H1 (cell line): ENCODE measurements at regions of chr11 and their contacts with region 1.

Region 1: GRCh38 chr11:61567286-61568061 is 13.4 kb downstream of the SYT7 start:
- DNase-seq: peak; percentile 58 to 98
- H3K4me3 ChIP-seq: peak overlapping the region; percentile 16 to 54 (median 39); a peak in 6 of 8 replicates
- H3K27ac ChIP-seq: no peak overlapping the region
- H3K4me1 ChIP-seq: peaks cover 0 to 14% (median 5%) of the 10 kb centered on the region in 4 experiments; a peak in 5 of 7 replicates
- H3K27me3 ChIP-seq: peaks cover 0 to 10% (median 4%) of the 10 kb centered on the region in 4 experiments; a peak in 3 of 7 replicates
- CTCF ChIP-seq: peak; percentile 95 to 98 (median 96)
- EP300 ChIP-seq: no peak
- POLR2A ChIP-seq: no peak
- RAD21 ChIP-seq: peak; percentile 40 to 63; a peak in 3 of 4 replicates

Region 2: DNA sequence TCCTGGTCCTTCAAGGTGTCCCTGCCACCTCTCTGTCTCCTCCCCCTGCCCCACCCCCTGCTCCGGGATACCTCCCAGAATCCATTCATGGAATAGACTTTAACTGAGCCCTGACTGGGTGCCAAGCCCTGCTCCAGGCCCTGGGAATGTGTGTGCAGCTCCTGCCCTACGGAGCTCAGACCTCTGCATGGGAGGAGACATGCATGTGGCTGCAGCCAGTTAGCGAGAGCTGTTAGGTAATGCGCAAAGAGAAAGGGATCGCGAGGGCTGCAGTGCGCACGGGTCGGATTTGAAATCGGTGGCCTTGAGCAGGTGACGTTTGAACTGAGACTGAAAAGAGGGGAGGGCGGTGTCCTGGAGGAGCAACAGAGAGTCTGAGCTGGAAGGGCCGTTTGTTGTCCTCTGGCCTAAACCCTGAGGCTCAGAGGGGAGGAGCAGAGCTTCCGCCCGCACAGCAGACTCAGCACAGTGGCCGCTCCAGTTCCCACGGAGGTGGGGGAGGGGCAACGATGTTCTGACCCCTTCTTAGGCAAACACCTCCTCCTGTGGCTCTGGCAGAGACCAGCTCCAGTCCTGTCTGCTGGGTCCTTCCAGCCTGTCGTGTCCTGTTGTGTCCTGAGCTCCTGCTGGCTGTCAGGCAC is 78.7 kb before region 1 on chr11:
- CTCF ChIA-PET with region 1: interaction called, 37 read pairs
- POLR2A ChIA-PET with region 1: no interaction called
- DNase-seq: peak in 1 of 2 experiments; percentile 66
- H3K4me3 ChIP-seq: no peak overlapping the region
- H3K27ac ChIP-seq: no peak overlapping the region
- H3K4me1 ChIP-seq: peaks cover 0 to 23% (median 17%) of the 10 kb centered on the region in 4 experiments; a peak in 6 of 7 replicates
- H3K27me3 ChIP-seq: 0 out of 7 replicates have a peak, but pooled peaks cover 0 to 2% (median 0%) of the 10 kb centered on the region in 4 experiments
- CTCF ChIP-seq: no peak
- EP300 ChIP-seq: no peak
- POLR2A ChIP-seq: no peak
- RAD21 ChIP-seq: no peak

Region 3: DNA sequence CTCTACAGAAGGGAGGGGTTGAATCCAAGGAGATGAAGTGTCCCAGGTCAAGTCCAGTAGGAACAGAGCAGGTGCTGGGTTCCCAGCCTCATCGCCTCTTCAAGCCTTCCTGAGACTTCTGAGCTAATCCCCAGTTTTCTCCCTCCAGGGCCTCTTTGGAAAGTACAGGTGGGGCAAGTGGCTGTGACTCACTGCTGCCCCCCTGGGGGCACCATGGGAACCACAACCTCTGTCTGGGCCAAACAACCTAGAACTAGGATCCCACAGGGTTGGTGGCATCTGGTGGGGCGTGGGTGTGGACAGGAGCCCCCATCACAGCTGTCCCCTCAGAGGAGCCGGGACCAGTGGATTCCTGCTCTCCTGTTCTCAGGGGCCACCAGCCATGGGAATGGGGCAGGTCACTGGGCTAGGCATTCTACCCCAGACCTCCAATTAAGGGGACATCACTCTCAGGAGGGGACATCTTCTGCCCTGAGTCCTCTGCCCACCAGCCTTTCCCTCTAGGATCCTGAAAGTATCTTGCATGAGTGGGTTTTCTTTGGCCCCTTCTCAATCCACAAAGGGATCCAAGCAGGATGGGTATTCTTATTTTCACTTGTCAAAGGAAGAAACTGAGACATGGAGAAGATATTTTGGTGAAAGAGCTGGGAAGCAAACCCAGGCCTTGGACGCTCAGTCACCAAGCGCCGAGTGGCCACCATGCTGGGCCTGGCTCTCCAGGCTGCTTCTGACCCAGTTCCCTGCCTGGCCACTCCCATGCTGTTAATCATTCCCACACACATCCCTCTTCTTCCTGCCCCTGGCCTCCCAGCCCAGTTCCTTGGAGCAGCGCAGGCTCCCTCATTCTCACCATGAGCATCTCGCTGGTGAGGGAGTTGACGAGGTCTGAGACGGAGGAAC is 35.1 kb before region 1 on chr11:
- CTCF ChIA-PET with region 1: interaction called, 66 read pairs
- POLR2A ChIA-PET with region 1: interaction called, 3 read pairs
- DNase-seq: peak in 1 of 2 experiments; percentile 90
- H3K4me3 ChIP-seq: no peak overlapping the region
- H3K27ac ChIP-seq: no peak overlapping the region
- H3K4me1 ChIP-seq: peaks cover 0 to 11% (median 4%) of the 10 kb centered on the region in 4 experiments; a peak in 5 of 7 replicates
- H3K27me3 ChIP-seq: no peaks in the 10 kb centered on the region
- CTCF ChIP-seq: peak in 2 of 3 experiments; percentile 89 to 94; a peak in 3 of 4 replicates
- EP300 ChIP-seq: no peak
- POLR2A ChIP-seq: no peak
- RAD21 ChIP-seq: peak; percentile 69 to 81

Region 4: DNA sequence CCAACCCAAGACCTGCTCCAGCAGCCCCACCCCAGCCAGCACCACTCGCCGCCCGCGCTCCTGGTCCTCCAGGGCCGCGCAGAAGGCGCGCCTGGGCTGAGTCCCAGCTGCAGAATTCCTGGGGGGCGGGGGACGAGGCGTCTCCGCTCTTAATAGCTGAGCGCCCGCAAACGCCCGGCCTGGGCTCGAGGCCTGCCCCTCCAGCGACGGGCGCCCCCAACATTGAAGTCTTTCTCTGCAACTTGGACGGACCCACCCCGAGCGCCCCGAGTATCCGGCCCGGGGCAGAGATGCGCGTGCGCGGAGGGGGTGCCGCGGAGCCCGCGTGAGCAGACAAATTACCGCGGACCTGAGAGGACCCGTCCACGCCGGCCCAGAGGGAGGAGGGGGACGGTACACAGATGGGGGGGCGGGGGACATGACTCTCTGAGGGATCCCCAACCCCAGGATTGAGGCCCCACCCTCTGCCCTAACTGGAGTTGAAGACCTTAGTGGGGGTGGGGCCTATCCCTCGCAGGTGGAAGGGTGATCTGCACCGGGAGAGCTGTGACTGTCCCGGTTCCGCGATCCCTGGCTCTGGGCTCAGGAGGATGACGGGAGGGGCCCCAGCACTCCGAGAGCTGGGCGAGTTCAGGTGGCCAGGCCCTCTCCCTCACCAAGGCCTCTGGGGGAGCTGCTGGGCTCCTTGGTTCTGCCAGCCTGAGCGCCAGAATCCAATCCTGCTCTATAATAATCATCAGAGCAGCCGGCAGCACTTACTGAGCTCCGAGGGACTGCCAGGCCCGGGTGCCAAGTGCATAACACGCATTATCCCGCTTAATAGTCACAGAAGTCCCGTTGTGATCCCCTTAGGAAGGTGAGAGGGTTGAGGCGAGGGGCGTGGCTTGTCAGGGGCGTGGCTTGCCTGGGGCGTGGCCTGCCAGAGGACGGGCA is 20.3 kb after region 1 on chr11:
- CTCF ChIA-PET with region 1: interaction called, 45 read pairs
- POLR2A ChIA-PET with region 1: interaction called, 3 read pairs
- DNase-seq: peak in 1 of 2 experiments; percentile 99
- H3K4me3 ChIP-seq: peak overlapping the region; percentile 40 to 68 (median 54)
- H3K27ac ChIP-seq: no peak overlapping the region
- H3K4me1 ChIP-seq: peaks cover 0 to 18% (median 14%) of the 10 kb centered on the region in 4 experiments; a peak in 6 of 7 replicates
- H3K27me3 ChIP-seq: peaks cover 0 to 21% (median 11%) of the 10 kb centered on the region in 4 experiments; a peak in 3 of 7 replicates
- CTCF ChIP-seq: peak; percentile 29 to 45 (median 44)
- EP300 ChIP-seq: no peak
- POLR2A ChIP-seq: no peak
- RAD21 ChIP-seq: peak in 1 of 2 experiments; percentile 32; a peak in 2 of 4 replicates

Region 5: GRCh38 chr11:61617515-61617914 is 50.0 kb after region 1 on chr11:
- CTCF ChIA-PET with region 1: interaction called, 15 read pairs
- POLR2A ChIA-PET with region 1: interaction called, 3 read pairs
- DNase-seq: no peak
- H3K4me3 ChIP-seq: no peak overlapping the region
- H3K27ac ChIP-seq: no peak overlapping the region
- H3K4me1 ChIP-seq: peaks cover 0 to 7% (median 4%) of the 10 kb centered on the region in 4 experiments; a peak in 3 of 7 replicates
- H3K27me3 ChIP-seq: no peaks in the 10 kb centered on the region
- CTCF ChIP-seq: peak in 1 of 3 experiments; percentile 21; a peak in 1 of 4 replicates
- EP300 ChIP-seq: no peak
- POLR2A ChIP-seq: no peak
- RAD21 ChIP-seq: no peak